AG04449 (cell line): ENCODE measurements at regions of chr14 and their contacts with region 1.

Region 1: GRCh38 chr14:24160850-24161804 is at the start of gene IRF9:
- DNase-seq: peak; percentile 72
- H3K4me3 ChIP-seq: peak within 1 kb of the TSS; percentile 93
- CTCF ChIP-seq: peak; percentile 98

Region 2: DNA sequence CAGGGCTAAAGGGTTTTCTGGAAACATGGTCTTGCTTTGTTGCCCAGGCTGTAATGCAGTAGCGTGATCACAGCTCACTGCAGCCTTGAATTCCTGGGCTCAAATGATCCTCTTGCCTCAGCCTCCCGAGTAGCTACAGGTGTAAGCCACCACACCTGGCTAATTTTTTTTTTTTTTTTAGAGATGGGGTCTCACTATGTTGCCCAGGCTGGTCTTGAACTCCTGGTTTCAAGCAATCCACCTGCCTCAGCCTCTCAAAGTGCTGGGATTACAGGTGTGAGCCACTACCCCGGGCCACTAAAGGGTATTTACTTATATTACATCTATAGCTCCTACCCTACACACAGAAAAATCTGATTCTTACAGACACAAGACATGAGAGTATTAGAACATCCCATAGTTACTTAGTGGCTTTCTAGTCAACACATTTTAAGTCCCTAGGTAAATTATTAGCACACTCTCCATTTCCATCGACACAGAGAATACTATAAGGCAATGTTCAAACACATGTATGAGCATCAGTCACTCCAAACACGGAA is 52.7 kb before region 1 on chr14:
- CTCF ChIA-PET with region 1: interaction called, 27 read pairs
- POLR2A ChIA-PET with region 1: no interaction called
- DNase-seq: no peak
- H3K4me3 ChIP-seq: no peak overlapping the region
- CTCF ChIP-seq: no peak

Region 3: DNA sequence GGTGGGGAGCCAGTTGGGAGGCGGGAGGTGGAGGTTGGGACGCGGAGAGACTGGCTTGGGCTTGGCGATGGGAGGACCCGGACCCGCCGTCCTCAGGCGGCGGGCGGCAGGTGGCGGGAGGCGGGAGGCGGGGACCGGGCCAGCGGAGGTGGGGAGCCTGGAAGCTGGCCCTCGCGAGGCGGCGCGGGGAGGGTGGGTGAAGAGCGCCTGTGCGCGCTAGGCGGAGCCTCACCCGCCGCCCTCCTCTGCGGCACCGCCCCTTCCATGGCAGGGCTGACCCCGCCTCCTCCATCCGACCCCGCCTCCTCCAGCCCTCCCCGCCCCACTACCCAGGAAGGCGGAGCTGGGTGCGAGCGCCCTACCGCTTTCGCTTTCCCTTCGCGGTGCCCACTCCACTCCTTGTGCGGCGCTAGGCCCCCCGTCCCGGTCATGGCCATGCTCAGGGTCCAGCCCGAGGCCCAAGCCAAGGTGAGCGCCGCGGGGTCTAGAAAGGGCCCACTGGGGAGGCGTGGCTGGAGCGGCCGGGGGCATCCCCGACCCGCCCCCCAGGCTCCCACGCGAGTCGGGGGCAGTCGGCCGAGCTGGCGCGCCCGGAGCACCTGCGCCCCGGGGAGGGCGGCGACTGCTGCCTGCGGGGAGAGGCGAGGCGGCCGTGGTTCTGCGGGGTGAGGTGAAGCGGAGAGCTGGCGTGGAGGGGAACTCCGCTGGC is 25.1 kb before region 1 on chr14 and contains the start of gene PSME1:
- CTCF ChIA-PET with region 1: interaction called, 15 read pairs
- POLR2A ChIA-PET with region 1: interaction called, 5 read pairs
- DNase-seq: no peak
- H3K4me3 ChIP-seq: peak within 1 kb of the TSS; percentile 73
- CTCF ChIP-seq: no peak

Region 4: GRCh38 chr14:24146978-24147760 is 14.0 kb before region 1 on chr14 and contains the start of gene RNF31:
- CTCF ChIA-PET with region 1: interaction called, 165 read pairs
- POLR2A ChIA-PET with region 1: interaction called, 9 read pairs
- DNase-seq: peak; percentile 88
- H3K4me3 ChIP-seq: peak within 1 kb of the TSS; percentile 92
- CTCF ChIP-seq: no peak

Region 5: GRCh38 chr14:24179961-24180796 is 19.1 kb after region 1 on chr14:
- CTCF ChIA-PET with region 1: interaction called, 60 read pairs
- POLR2A ChIA-PET with region 1: interaction called, 6 read pairs
- DNase-seq: peak; percentile 21
- H3K4me3 ChIP-seq: no peak overlapping the region
- CTCF ChIP-seq: no peak

Region 6: DNA sequence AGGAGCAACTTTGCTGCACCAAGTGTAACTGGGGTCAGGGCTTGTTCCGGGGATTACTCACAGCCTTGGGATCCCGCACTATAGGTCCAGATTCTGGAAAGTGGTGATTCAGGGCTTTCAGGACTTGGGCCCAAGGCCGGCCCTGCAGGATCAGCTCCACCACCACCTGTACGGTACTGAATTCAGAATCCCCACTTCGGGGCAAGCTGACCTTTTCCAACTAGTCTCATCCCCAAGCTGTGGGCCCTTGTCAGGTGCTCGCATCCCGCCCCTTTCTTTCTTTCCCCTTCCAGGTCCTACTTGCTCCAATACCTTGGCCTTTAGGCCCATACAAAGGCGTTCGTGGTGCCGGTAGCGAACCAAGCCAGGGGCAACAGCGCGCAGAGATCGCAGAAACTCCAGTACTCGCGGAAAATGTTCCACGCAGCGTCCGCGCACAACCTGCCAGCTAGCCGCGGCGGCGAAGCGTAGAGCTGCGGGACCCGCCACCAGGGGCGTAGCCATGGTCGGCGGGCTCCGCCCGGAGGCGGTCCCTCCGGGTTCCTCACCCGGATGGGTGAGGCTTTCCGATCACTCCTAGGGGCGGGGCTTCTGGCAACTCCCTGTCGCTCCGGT is 80.8 kb after region 1 on chr14:
- CTCF ChIA-PET with region 1: interaction called, 10 read pairs
- POLR2A ChIA-PET with region 1: interaction called, 4 read pairs
- DNase-seq: no peak
- H3K4me3 ChIP-seq: peak overlapping the region; percentile 91
- CTCF ChIP-seq: peak; percentile 65